HEK293T (cell line): ENCODE measurements at regions of chr6 and their contacts with region 1.

Region 1: DNA sequence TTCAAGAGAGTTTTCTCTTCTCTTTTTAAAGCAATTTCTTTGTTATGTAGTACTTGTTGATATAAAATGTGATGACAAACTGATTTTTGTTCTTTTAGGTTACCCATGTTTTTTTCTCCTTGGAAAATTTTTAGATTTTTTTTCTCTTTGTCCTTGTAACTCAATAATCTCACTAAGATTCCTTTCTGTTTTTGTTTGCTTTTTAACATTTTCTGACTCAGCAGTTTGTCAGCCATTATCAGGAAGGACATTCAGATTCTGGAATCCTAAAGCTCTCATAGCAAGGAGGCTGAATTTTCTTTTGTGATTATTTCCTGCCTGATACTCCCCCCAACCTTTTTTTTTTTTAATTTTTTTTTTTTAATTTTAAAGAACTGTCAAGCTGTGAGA is 75.2 kb upstream of the CITED2 start:
- DNase-seq: no peak

Region 2: DNA sequence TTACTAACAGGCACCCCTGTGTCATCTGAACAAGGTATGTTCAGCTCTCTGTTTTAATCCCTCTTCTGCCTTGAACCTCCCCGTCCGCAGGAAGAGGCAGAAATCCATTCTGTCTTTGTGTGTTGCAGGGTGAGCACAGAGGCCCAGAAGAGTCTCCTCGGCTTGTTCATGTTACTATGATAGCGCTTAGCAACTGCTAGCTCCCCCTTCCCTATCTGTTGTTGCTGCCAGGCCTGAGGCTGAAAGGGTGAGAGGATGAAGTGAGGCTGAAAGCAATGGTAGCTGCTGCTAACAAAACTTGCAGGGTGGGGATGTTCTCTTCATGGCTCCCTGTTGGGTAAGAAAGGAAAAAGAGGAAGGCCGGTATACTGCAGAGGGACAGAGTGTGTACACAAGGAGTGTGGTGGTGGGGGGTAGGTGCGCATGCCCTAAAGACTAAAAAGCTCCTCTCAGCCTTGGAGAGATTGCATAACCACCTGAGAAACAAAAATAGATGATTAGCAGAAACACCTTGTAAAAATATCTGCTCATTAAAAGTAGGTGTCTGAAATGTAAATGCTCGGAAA is 19.9 kb before region 1 on chr6:
- CTCF ChIA-PET with region 1: interaction called, 14 read pairs
- POLR2A ChIA-PET with region 1: no interaction called
- DNase-seq: no peak

Region 3: GRCh38 chr6:139990856-139991465 is 541.4 kb after region 1 on chr6:
- CTCF ChIA-PET with region 1: no interaction called
- POLR2A ChIA-PET with region 1: no interaction called
- DNase-seq: no peak